A673 (cell line): ENCODE measurements at regions of chr3 and their contacts with region 1.

Region 1: GRCh38 chr3:43155464-43156121 is 49.7 kb upstream of the POMGNT2 start:
- DNase-seq: peak; percentile 68
- H3K4me3 ChIP-seq: no peak overlapping the region
- H3K27ac ChIP-seq: no peak overlapping the region
- H3K4me1 ChIP-seq: no peaks in the 10 kb centered on the region
- H3K27me3 ChIP-seq: no peaks in the 10 kb centered on the region
- CTCF ChIP-seq: peak; percentile 51

Region 2: DNA sequence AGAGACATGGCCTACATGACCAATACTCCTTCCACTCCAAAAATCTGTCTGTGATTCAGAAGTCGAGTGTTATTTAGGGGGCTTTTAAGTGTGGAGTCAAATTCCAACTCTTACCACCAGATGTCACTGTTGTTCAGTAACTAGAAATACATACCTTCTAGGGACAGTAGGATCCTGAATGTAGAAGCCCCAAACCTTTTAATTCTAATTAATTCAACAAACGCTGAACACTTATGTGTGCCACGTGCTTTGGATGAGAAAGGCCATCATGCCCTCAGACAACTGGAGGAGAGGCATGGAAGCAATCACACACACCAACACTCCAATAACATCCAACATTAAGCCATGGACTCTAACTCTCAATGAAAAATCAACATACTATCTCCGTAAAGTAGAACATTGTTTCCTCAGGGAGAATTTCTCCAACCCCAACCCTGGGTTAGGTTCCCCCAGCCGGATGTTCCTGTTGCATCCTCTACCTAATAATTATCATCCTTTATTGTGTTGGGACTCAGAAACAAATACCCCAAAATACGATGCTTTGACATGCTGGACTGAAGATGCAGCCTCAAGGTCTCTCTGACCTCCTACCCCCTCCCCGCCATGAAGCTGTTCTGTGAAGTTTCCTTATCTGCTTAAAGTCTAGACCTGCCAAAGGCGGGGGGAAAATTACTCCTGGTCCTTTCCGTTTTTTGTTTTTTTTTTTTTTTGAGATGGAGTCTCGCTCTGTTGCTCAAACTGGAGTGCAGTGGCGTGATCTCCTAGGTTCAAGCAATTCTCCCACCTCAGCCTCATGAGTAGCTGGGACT is 374.5 kb before region 1 on chr3:
- CTCF ChIA-PET with region 1: no interaction called
- POLR2A ChIA-PET with region 1: no interaction called
- intact Hi-C with region 1: no loop called
- DNase-seq: peak; percentile 57
- H3K4me3 ChIP-seq: no peak overlapping the region
- H3K27ac ChIP-seq: no peak overlapping the region
- H3K4me1 ChIP-seq: no peaks in the 10 kb centered on the region
- H3K27me3 ChIP-seq: no peaks in the 10 kb centered on the region
- CTCF ChIP-seq: peak; percentile 59

Region 3: DNA sequence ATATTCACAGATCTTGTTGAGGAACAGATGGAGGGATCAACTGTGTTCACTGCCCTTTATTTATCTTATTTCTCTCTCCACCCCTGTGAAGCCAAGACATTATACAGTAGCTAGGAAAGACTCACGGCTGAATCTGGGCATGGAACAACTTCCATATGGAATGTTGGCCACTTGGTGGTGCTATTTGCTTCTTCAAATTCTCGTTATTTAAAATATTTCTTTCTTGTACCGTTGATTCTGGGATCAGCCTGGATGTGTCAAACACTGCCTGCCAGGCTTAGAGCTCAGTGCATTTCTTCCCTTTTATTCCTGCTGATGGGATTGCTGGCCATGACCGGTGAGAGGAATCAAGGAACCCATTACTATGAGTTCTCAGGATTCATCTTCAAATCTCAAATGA is 194.0 kb before region 1 on chr3:
- CTCF ChIA-PET with region 1: interaction called, 4 read pairs
- POLR2A ChIA-PET with region 1: no interaction called
- intact Hi-C with region 1: loop called (anchors 5 kb)
- DNase-seq: peak; percentile 35
- H3K4me3 ChIP-seq: no peak overlapping the region
- H3K27ac ChIP-seq: no peak overlapping the region
- H3K4me1 ChIP-seq: no peaks in the 10 kb centered on the region
- H3K27me3 ChIP-seq: no peaks in the 10 kb centered on the region
- CTCF ChIP-seq: peak; percentile 51

Region 4: DNA sequence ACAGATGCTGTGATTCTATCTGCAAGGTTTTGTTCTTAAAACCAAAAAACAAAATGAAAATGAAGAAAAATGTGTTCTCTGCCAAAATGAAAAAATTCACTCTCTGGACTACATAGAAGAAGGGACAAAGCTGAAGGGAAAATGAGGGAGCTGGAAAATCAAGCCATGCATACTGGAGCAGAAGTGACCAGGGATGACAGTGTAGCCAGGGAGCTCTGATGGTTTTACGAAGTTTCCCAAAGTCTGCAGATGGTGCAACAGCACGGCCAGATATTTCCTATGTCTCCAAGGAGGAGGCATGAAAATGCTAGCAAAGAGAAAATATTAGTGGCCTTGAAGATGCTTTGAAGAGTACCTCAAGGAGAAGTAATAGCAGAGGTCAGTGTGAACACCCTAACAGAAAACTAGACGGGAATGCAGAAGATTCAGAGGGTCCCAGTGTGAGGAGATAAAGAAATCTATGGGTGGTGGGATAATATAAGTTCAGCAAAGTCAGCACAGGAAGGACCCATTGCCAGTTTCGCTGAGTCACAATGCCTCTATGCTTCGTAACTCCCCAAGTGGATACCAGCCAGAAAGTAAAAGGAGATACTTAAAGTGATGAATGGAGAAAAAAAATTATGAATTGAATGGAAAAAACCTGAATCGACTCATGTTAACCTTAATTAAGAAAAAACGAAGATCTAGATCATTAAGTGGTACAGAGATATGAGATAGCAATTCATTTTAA is 10.7 kb before region 1 on chr3:
- CTCF ChIA-PET with region 1: no interaction called
- POLR2A ChIA-PET with region 1: no interaction called
- intact Hi-C with region 1: no loop called
- DNase-seq: peak; percentile 10
- H3K4me3 ChIP-seq: no peak overlapping the region
- H3K27ac ChIP-seq: no peak overlapping the region
- H3K4me1 ChIP-seq: no peaks in the 10 kb centered on the region
- H3K27me3 ChIP-seq: no peaks in the 10 kb centered on the region
- CTCF ChIP-seq: no peak

Region 5: GRCh38 chr3:43223670-43224364 is 68.2 kb after region 1 on chr3:
- CTCF ChIA-PET with region 1: no interaction called
- POLR2A ChIA-PET with region 1: no interaction called
- intact Hi-C with region 1: no loop called
- DNase-seq: no peak
- H3K4me3 ChIP-seq: no peak overlapping the region
- H3K27ac ChIP-seq: no peak overlapping the region
- H3K4me1 ChIP-seq: no peaks in the 10 kb centered on the region
- H3K27me3 ChIP-seq: no peaks in the 10 kb centered on the region
- CTCF ChIP-seq: peak; percentile 44